Breast epithelium (tissue), 4 donors: ENCODE measurements at regions of chr1 and their contacts with region 1.

Region 1: DNA sequence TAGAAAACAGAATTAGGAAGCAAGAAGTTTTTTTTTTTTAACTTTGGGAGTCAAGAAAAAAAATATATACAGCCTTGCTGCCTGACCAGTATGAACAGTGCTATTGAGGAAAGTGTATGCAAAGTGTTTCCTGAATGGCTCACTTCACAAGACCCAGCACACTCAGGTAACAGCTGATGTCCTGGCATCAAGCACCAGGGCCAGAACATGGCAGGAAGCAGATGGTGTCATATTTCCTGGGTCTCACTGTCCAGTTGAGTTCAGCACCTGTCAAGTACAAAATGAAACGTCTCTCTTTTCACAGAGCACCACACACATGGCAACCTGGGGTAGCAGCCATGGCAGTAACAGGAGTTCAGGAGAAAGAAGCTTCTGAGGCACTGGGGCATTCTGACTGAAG is 372.3 kb downstream of the TTLL7 start:
- DNase-seq: no peak
- H3K4me3 ChIP-seq: no peak overlapping the region
- H3K27ac ChIP-seq: no peak overlapping the region
- H3K4me1 ChIP-seq: no peaks in the 10 kb centered on the region
- H3K27me3 ChIP-seq: no peaks in the 10 kb centered on the region
- CTCF ChIP-seq: no peak
- POLR2A ChIP-seq: no peak

Region 2: DNA sequence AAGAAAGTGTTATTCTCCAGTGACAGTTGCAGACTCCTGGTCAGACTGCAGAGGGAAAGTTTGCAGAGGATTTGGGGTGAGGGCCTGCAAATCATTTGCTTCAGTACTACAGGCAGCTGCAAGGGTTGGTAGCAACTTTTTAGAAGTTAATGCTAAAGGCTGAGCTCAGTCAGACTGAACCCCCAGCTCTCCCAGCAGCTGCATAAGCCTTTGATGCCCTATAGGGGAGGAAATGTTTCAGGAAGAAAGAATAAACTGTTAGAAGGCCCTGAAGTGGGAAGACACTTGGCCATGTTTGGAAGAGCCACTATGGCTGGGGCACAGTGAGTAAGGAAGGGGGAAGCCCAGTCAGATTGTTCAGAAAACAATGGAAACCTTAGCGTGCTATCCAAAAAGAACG is 11.2 kb before region 1 on chr1:
- intact Hi-C with region 1: loop called (anchors 1 kb)
- DNase-seq: no peak
- H3K4me3 ChIP-seq: no peak overlapping the region
- H3K27ac ChIP-seq: no peak overlapping the region
- H3K4me1 ChIP-seq: no peaks in the 10 kb centered on the region
- H3K27me3 ChIP-seq: no peaks in the 10 kb centered on the region
- CTCF ChIP-seq: no peak
- POLR2A ChIP-seq: no peak

Region 3: DNA sequence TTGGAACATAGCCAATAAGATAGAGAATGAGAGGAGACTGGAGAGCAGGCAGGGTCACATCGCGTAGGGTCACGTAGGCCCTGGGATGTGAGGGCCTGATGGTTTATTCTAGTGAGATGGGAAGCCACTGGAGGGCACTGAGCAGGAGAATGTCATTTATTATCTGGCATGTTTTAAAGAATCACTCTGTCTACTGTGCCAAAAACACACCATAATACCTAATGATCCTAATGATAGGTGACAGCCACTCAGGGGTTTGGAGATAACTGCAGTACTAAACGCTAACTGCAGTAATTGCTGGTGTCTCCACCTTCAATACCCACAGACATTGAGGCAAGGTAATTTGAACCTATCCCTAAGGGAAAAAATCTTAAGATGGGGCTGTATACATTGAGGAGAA is 187.0 kb after region 1 on chr1:
- intact Hi-C with region 1: loop called (anchors 5 kb)
- DNase-seq: no peak
- H3K4me3 ChIP-seq: no peak overlapping the region
- H3K27ac ChIP-seq: no peak overlapping the region
- H3K4me1 ChIP-seq: no peaks in the 10 kb centered on the region
- H3K27me3 ChIP-seq: no peaks in the 10 kb centered on the region
- CTCF ChIP-seq: no peak
- POLR2A ChIP-seq: no peak